ENCODE measurements at regions of chr3 and their contacts with region 1.

Region 1: DNA sequence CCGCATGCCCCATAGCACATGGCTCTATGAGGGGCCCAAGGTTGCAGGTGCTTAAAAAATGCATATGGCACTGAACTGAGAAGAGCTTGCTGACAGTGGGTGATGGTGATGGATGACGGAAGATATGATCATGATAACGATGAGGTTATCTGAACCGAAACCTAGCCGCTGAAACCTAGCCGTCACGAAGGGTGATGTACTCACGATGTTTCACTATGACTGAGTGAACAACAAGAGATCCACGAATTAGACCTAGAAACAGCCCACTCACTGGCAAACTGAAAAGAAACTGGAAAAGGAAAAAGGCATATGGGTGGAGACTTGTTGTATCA is 57.6 kb upstream of the BCL6 start:
- DNase-seq: peak; percentile 89
- H3K4me3 Mint-ChIP-seq: peak overlapping the region; percentile 54
- H3K27ac Mint-ChIP-seq: peak overlapping the region; percentile 95
- H3K4me1 Mint-ChIP-seq: peaks cover 96% of the 10 kb centered on the region
- H3K27me3 Mint-ChIP-seq: no peaks in the 10 kb centered on the region

Region 2: DNA sequence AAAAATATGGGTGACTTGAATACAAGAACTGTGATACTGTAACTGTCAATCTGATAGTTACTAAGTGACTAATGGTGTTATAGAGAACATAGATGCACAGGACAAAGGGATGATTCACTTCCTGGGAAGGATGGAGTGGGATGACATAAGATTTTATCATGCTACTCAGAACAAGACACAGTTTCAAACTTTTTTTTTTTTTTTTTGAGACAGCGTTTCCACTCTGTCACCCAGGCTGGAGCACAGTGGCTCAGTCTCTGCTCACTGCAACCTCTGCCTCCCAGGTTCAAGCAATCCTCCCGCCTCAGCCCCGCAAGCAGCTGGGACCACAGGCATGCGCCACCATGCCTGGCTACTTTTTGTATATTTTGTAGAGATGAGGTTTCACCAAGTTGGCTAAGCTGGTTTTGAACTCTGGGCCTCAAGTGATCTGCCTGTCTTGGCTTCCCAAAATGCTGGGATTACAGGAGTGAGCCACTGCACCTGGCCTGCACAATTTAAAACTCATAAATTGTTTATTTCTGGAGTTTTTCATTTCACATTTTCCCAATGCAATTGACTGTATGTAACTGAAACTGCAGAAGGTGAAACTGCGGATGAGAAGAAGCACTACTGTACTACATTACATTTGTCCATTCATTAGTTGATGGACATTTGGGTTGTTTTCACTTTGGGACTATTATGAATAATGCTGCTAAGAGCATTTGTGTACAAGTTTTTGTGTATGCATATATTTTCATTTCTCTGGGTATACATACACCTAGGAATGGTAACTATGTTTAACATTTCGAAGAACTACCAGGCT is 919.8 kb before region 1 on chr3:
- CTCF ChIA-PET with region 1: no interaction called
- POLR2A ChIA-PET with region 1: no interaction called
- intact Hi-C with region 1: loop called (anchors 10 kb)
- DNase-seq: peak; percentile 80
- H3K4me3 Mint-ChIP-seq: peak overlapping the region; percentile 59
- H3K27ac Mint-ChIP-seq: peak overlapping the region; percentile 90
- H3K4me1 Mint-ChIP-seq: peaks cover 63% of the 10 kb centered on the region
- H3K27me3 Mint-ChIP-seq: no peaks in the 10 kb centered on the region

Region 3: DNA sequence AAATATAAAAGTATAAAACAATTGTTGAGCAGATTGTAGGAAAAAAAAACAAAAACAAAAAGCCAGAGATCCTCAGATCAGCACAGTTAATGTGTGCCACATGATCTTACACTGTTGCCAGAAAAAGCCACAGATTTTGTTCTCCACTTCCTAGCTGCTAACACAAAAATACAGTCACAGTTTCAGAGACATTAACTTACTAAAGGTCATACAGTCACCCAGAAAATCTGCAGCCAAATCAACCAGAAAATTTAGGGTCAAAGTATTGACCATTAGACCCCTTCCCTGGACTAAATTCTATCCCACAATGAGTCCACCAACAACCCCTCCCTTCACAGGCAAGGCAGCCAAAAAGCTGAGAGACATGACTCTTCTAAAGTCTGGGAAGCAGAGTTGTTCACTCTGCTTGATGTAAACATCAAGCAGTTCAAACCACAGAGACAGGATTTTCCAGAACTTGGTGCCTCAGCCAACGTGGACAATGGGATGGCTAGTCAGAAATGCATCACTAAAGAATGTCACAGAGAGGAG is 191.8 kb before region 1 on chr3:
- CTCF ChIA-PET with region 1: no interaction called
- POLR2A ChIA-PET with region 1: no interaction called
- intact Hi-C with region 1: no loop called
- DNase-seq: no peak
- H3K4me3 Mint-ChIP-seq: no peak overlapping the region
- H3K27ac Mint-ChIP-seq: no peak overlapping the region
- H3K4me1 Mint-ChIP-seq: no peaks in the 10 kb centered on the region
- H3K27me3 Mint-ChIP-seq: peaks cover 35% of the 10 kb centered on the region

Region 4: GRCh38 chr3:187777331-187777941 is 25.5 kb before region 1 on chr3:
- CTCF ChIA-PET with region 1: interaction called, 5 read pairs
- POLR2A ChIA-PET with region 1: interaction called, 9 read pairs
- intact Hi-C with region 1: loop called (anchors 1 kb)
- DNase-seq: peak; percentile 72
- H3K4me3 Mint-ChIP-seq: peak overlapping the region; percentile 21
- H3K27ac Mint-ChIP-seq: peak overlapping the region; percentile 91
- H3K4me1 Mint-ChIP-seq: peaks cover 50% of the 10 kb centered on the region
- H3K27me3 Mint-ChIP-seq: no peaks in the 10 kb centered on the region

Region 5: GRCh38 chr3:187974871-187975271 is 172.0 kb after region 1 on chr3:
- CTCF ChIA-PET with region 1: interaction called, 3 read pairs
- POLR2A ChIA-PET with region 1: interaction called, 5 read pairs
- intact Hi-C with region 1: loop called (anchors 1 kb)
- DNase-seq: no peak
- H3K4me3 Mint-ChIP-seq: peak overlapping the region; percentile 62
- H3K27ac Mint-ChIP-seq: peak overlapping the region; percentile 92
- H3K4me1 Mint-ChIP-seq: peaks cover 63% of the 10 kb centered on the region
- H3K27me3 Mint-ChIP-seq: no peaks in the 10 kb centered on the region

Region 6: GRCh38 chr3:188170461-188171459 is 367.9 kb after region 1 on chr3:
- CTCF ChIA-PET with region 1: no interaction called
- POLR2A ChIA-PET with region 1: no interaction called
- intact Hi-C with region 1: loop called (anchors 1 kb)
- DNase-seq: peak; percentile 82
- H3K4me3 Mint-ChIP-seq: peak overlapping the region; percentile 28
- H3K27ac Mint-ChIP-seq: peak overlapping the region; percentile 89
- H3K4me1 Mint-ChIP-seq: peaks cover 58% of the 10 kb centered on the region
- H3K27me3 Mint-ChIP-seq: no peaks in the 10 kb centered on the region

Region 7: GRCh38 chr3:188389711-188390342 is 586.9 kb after region 1 on chr3:
- CTCF ChIA-PET with region 1: no interaction called
- POLR2A ChIA-PET with region 1: no interaction called
- intact Hi-C with region 1: loop called (anchors 10 kb)
- DNase-seq: peak; percentile 74
- H3K4me3 Mint-ChIP-seq: no peak overlapping the region
- H3K27ac Mint-ChIP-seq: peak overlapping the region; percentile 50
- H3K4me1 Mint-ChIP-seq: peaks cover 27% of the 10 kb centered on the region
- H3K27me3 Mint-ChIP-seq: no peaks in the 10 kb centered on the region

Measured in activated CD4-positive, alpha-beta memory T cell treated with anti-CD3 and anti-CD28 coated beads for 36 hours (primary cell).